ENCODE measurements at regions of chr14 and their contacts with region 1.

Region 1: GRCh38 chr14:104932676-104933631 is 8.3 kb downstream of the PLD4 start:
- DNase-seq: peak; percentile 78

Region 2: GRCh38 chr14:104715422-104715821 is 217.5 kb before region 1 on chr14:
- in situ Hi-C with region 1: loop called (anchors 10 kb)
- DNase-seq: no peak

Region 3: GRCh38 chr14:104770851-104771272 is 162.1 kb before region 1 on chr14:
- in situ Hi-C with region 1: loop called (anchors 10 kb)
- DNase-seq: no peak

Region 4: DNA sequence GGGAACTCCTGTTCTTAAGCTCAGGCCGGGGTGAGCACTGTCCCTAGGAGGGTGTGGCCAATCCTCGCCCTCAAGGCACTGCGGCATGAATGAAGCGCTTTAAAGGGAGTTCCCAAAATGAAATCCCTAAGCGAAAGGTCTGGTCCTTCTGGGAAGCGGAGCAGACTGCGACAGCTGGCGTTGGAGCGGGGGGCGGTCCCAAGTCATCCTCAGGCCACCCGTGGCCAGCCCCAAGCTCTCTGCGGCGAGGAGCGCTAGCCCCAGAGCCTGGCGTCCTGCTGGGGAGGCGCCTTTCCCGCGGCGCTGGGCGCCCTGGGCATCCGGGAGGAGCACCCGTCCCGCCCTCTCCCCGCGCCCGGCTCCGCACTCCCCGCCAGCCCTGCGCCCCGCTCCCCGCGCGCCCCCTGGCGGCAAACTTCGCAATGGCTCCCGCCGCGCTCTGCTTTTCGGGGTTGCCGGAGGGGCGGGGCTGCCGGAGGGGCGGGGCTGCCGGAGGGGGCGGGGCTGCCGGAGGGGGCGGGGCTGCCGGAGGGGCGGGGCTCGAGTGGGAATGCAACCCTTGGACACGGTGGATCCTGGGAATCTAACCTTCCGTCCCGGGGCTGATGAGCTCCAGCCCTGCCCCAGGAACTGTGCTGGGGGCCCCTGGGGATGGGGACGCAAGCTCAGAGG is 106.6 kb before region 1 on chr14:
- in situ Hi-C with region 1: loop called (anchors 10 kb)
- DNase-seq: peak; percentile 71

Region 5: GRCh38 chr14:105059035-105059924 is 126.3 kb after region 1 on chr14:
- in situ Hi-C with region 1: loop called (anchors 5 kb)
- DNase-seq: no peak

Measured in G401 (cell line).